Lower leg skin (tissue), 4 donors: ENCODE measurements at regions of chr16 and their contacts with region 1.

Region 1: GRCh38 chr16:70534971-70535370 is 11.4 kb downstream of the SF3B3 start:
- DNase-seq: no peak
- H3K4me3 ChIP-seq: no peak overlapping the region
- CTCF ChIP-seq: no peak
- POLR2A ChIP-seq: no peak

Region 2: DNA sequence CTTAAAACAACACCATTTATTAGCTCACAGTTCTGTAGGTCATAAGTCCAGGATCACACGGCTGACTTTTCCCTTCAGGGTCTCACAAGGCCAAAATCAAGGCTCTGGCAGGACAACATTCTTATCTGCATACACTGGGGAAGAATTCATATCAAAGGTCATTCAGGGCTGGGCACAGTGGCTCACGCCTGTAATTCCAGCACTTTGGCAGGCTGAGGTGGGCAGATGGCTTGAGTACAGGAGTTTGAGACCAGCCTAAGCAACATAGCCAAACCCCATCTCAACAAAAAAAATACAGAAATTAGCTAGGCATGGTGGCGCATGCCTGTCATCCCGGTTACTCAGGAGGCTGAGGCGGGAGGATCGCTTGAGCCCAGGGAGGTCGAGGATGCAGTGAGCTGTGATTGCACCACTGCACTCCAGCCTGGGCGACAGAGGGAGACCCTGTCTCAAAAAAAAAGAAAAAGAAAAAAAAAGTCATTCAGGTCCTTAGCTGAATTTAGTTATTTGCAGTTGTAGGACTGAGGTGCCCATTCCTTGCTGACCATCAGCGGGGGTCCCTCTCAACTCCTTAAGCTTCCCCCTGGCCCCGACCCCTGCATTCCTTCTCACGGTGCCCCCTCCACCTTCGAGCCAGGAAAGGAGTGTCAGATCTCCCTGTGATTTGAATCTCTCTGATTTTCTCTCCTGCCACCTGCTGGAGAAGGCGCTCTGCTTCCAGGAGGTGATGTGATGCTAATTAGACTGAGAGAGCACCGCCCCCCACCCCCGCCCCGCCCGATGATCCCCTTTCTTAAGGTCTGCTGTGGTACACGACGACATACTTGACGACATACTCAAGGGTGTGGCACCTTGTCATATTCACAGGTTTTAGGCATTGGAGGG is 675.6 kb before region 1 on chr16:
- intact Hi-C with region 1: no loop called
- DNase-seq: no peak
- H3K4me3 ChIP-seq: no peak overlapping the region
- CTCF ChIP-seq: peak in 1 of 3 donors; percentile 44
- POLR2A ChIP-seq: no peak

Region 3: GRCh38 chr16:70342016-70342415 is 193.0 kb before region 1 on chr16:
- intact Hi-C with region 1: no loop called
- DNase-seq: no peak
- H3K4me3 ChIP-seq: no peak overlapping the region
- CTCF ChIP-seq: no peak
- POLR2A ChIP-seq: no peak

Region 4: GRCh38 chr16:70627696-70628095 is 92.7 kb after region 1 on chr16:
- intact Hi-C with region 1: no loop called
- DNase-seq: no peak
- H3K4me3 ChIP-seq: no peak overlapping the region
- CTCF ChIP-seq: no peak
- POLR2A ChIP-seq: no peak

Region 5: DNA sequence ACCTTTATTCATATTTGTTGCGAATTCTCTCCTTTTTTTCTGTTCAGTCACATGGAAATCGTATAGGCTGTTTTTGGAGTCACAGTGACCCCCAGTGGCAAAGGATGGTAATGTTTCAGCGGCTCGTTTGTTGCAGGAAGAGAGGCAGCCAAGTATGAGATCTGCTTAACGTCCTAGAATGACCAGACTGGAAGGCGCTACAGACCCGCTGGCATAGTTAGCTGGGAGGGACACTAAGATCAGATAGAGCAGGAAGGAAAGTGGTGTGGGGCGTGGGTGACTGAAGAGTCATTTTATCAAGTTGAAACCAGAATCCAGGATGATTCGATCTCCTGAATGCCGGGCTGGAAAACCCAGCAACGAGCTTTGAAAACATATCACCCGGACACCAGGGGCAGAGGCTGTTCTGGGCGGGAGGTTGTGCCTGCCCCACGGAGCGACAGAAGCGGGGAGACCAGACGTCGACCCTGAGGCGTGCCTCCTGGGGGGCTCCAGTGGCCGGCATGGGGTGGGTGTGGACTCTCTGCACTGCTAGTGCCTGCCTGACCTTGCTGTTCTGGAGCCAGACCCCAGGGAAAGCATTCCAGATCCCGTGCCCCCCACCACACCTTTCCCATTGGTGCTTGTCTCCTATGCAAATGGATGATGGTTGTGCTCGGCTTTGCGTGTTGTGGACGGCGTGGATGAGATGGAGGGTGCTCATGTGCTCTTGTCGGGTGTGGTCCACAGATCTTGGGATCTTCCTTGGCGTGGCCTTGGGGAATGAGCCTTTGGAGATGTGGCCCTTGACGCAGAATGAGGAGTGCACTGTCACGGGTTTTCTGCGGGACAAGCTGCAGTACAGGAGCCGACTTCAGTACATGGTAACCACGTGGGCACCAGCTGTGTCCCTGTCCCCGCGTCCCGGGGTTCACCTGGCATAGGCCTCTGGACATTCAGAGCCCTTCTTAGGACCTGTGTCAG is 119.1 kb after region 1 on chr16:
- intact Hi-C with region 1: loop called (anchors 5 kb)
- DNase-seq: peak; percentile 88 to 97
- H3K4me3 ChIP-seq: no peak overlapping the region
- CTCF ChIP-seq: peak in 2 of 3 donors; percentile 87 to 88
- POLR2A ChIP-seq: no peak

Region 6: DNA sequence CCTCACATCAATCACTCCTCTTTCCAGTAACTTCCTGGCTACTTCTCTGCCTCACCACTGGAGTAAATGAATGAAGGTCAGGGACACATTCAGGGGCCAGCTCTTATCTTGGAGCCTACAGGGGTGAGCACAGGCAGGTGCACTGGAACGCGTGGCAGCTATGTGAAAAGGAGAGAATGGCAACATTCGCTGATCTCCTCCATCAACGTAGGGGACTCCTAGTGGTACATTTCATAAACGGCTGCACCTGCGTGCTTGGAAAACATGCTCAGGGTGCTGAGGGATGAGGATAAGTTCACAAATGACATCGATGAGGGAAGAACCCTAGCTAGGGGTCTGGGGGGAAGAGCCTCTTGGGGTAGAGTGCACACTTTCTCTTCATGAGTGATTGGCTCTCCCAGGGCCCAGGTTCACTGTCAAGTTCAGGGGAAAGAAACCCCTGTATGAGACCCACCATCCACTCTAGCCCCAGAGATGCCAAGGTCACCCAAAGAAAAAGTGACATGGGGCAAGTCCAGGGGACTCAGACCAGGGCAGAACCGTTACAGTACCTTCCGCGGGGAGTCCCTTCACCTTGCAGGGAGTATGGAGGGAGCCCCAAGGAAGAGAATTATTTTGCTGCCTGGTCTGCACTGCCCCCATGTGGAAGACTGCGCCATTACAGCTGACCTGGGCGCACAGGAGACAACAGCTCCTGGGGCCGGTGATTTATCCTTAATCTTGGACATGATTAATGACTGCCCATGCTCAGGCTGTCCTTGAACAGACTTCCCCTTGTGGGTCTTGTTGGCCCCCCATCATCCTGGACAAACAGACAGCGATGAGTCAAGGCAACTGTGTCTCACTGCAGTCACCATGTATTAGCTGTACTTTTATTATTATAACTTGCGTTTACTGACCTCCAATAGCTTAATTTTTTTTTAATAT is 235.9 kb after region 1 on chr16:
- intact Hi-C with region 1: loop called (anchors 10 kb)
- DNase-seq: peak; percentile 43 to 93
- H3K4me3 ChIP-seq: no peak overlapping the region
- CTCF ChIP-seq: peak in 1 of 3 donors; percentile 81
- POLR2A ChIP-seq: no peak